Vagina (tissue), 2 donors: ENCODE measurements at regions of chrX and their contacts with region 1.

Region 1: GRCh38 chrX:130170752-130171445 is 863 bp upstream of the RAB33A start:
- DNase-seq: no peak
- H3K4me3 ChIP-seq: peak overlapping the region; percentile 40 to 53
- H3K27ac ChIP-seq: no peak overlapping the region
- H3K4me1 ChIP-seq: peaks cover 19% of the 10 kb centered on the region
- H3K27me3 ChIP-seq: no peaks in the 10 kb centered on the region
- CTCF ChIP-seq: no peak
- POLR2A ChIP-seq: no peak

Region 2: GRCh38 chrX:130120746-130121504 is 50.0 kb before region 1 on chrX:
- intact Hi-C with region 1: loop called (anchors 5 kb)
- DNase-seq: no peak
- H3K4me3 ChIP-seq: peak overlapping the region; percentile 31 to 35
- H3K27ac ChIP-seq: peak overlapping the region; percentile 87
- H3K4me1 ChIP-seq: peaks cover 21% of the 10 kb centered on the region
- H3K27me3 ChIP-seq: no peaks in the 10 kb centered on the region
- CTCF ChIP-seq: peak in 2 of 3 experiments; percentile 55 to 75
- POLR2A ChIP-seq: no peak

Region 3: DNA sequence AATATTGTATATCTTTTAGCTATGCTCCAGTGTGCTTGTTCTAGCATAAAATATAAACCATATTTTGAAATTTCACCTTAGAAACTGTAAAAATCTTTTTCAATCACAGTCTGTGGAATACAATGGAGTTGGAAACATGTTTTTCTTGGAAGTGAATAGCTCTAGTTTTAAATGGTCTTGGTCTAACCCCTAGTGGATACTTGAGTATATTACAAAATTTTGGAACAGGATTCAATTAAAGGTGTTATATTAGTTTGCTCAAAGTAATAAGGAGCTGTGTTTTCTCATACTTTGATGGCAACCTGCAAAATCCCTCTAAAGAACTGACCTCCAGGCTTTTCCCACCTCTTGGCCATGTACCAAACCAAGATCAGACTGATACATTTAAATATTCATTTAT is 1900.4 kb after region 1 on chrX:
- intact Hi-C with region 1: no loop called
- DNase-seq: no peak
- H3K4me3 ChIP-seq: no peak overlapping the region
- H3K27ac ChIP-seq: no peak overlapping the region
- H3K4me1 ChIP-seq: no peaks in the 10 kb centered on the region
- H3K27me3 ChIP-seq: no peaks in the 10 kb centered on the region
- CTCF ChIP-seq: peak; percentile 4 to 18 (median 18)
- POLR2A ChIP-seq: no peak